Tibial artery (tissue), 4 donors: ENCODE measurements at regions of chr18 and their contacts with region 1.

Region 1: DNA sequence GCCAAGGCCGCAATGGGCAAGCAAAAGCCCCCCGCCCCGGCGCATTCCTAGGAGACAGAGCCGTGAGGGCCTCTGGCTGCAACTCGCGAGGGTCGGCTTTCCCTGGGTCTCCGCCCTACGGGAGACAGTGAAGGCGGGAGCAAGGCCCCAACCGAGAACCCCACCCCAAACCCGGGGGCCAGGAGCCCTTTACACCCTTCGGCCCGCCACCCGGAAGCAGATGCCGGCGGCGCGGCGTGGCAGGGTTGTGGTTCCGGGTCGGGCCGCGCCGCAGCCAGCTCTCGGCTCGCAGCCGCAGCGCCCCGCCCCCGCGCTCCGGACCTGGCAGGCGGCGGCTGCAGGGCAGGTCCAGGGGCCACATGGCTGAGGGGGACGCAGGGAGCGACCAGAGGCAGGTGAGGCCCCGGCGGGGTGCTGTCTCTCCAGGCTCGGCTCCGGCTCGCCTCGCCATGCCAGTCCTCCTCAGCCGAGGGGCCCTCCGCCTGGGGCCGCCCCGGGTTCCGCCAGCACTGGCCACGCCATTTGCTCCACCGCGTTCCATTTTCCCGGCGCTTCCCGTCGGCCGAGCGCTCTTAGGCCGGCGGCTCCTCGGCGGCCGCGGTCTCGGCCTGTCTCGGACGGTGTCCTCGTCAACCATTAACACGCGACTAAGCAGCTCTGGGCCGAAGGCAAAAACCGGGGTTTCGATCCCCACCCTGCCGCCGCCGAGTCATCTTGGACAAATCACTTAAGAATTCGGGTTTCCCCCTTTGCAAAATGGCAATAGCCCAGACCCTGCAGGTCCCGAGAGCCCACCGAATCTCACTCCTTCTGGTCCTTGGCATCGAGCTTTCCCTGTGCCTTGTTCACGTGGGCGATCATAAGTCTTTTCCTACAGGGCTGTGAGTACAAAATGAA is at the start of gene IMPACT:
- DNase-seq: peak; percentile 65 to 87
- H3K4me3 ChIP-seq: peak within 1 kb of the TSS; percentile 80 to 83
- H3K27ac ChIP-seq: peak within 1 kb of the TSS; percentile 84 to 86
- H3K4me1 ChIP-seq: peaks cover 0 to 16% (median 3%) of the 10 kb centered on the region in 4 donors
- H3K27me3 ChIP-seq: peaks cover 0 to 2% of the 10 kb centered on the region in 2 donors
- CTCF ChIP-seq: no peak

Region 2: GRCh38 chr18:24354286-24354685 is 72.4 kb before region 1 on chr18:
- intact Hi-C with region 1: loop called (anchors 10 kb)
- DNase-seq: no peak
- H3K4me3 ChIP-seq: no peak overlapping the region
- H3K27ac ChIP-seq: no peak overlapping the region
- H3K4me1 ChIP-seq: no peaks in the 10 kb centered on the region
- H3K27me3 ChIP-seq: no peaks in the 10 kb centered on the region
- CTCF ChIP-seq: no peak

Region 3: DNA sequence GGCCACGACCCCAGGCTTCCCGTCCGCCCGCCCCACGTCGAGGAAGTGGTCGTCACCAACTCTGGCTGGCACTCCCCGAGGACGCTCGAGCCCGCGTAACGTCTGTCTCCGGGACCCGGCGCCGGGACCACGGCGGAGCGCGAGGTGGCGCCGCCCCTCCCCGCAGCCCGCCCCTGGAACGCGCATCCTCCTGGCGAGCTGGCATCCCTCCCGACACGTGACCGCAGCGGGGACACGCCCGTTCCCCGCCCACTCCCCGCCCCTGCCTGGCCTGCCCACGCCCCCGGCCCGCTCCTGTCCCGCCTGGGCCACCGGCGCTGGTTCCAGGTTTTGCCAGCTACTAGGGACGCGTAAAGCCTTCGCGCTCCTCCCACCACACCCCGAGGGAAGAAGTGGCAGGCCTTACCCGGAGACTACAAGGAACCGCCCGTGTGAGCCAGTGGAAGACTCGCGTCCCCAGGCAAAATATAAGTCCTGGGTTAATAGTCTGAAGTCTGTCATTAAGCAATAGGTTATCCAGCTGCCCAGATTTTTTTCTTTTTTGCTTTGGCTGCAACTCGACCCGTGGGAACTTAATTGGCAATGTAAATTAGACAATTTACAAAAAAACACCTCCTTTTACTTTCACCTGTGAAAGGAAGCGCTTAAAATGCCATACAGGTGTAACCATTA is 28.8 kb before region 1 on chr18 and contains the start of gene OSBPL1A:
- intact Hi-C with region 1: loop called (anchors 1 kb)
- DNase-seq: peak; percentile 93 to 97
- H3K4me3 ChIP-seq: peak within 1 kb of the TSS; percentile 87 to 95
- H3K27ac ChIP-seq: peak within 1 kb of the TSS; percentile 86
- H3K4me1 ChIP-seq: peaks cover 0 to 23% (median 6%) of the 10 kb centered on the region in 4 donors
- H3K27me3 ChIP-seq: no peaks in the 10 kb centered on the region
- CTCF ChIP-seq: no peak

Region 4: DNA sequence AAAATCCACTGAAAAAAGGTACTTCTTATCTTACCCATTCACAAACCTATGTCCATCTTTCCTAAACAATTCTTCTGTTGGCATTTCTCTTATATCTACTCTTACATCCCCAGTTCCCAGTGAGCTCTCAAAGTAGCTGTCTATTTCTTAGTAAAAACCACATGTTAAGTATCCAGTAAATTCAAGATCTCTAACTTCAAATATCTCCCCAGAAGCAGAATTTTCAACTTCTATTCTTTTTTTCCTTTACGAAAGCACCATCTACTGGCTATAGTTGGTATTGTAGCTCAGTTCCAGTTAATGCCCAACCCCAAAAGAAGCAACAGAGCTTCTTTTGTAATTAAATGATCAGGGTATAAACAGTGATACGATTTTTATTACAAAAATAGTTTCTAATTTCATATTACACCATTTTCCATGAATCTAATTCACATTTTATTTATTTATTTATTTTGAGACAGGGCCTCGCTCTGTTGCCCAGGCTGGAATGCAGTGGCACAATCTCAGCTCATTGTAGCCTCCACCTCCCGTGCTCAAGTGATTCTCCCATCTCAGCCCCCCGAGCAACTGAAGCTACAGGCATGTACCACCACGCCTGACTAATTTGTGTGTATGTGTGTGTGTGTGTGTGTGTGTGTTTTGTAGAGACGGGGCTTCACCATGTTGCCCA is 62.3 kb after region 1 on chr18:
- intact Hi-C with region 1: loop called (anchors 10 kb)
- DNase-seq: no peak
- H3K4me3 ChIP-seq: no peak overlapping the region
- H3K27ac ChIP-seq: no peak overlapping the region
- H3K4me1 ChIP-seq: peaks cover 0 to 5% (median 0%) of the 10 kb centered on the region in 4 donors
- H3K27me3 ChIP-seq: peaks cover 0 to 3% of the 10 kb centered on the region in 2 donors
- CTCF ChIP-seq: peak; percentile 66 to 80